ENCODE measurements at regions of chr5 and their contacts with region 1.

Region 1: GRCh38 chr5:68287976-68288706 is 72.6 kb downstream of the PIK3R1 start:
- DNase-seq: peak; percentile 63
- H3K4me3 Mint-ChIP-seq: peak overlapping the region; percentile 84
- H3K27ac Mint-ChIP-seq: peak overlapping the region; percentile 88
- H3K4me1 Mint-ChIP-seq: peaks cover 86% of the 10 kb centered on the region
- H3K27me3 Mint-ChIP-seq: no peaks in the 10 kb centered on the region

Region 2: DNA sequence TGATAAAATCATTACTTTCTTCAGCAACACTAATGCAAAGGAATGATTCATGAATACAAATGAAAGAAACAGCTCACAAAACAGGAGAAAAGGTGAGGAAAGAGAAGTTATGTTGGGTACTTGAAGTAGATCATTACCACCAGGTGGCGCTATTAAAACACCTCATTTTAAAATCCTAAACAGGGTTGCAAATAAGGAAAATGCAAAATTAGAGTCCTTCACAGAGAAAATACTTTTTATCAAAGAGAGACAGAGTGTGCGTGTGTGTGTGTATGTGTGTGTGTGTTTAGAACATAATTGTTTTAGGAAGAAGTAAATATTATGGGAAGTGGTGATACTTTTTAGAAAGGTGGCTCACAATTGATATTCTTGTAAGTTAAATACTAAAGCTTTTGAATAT is 1042.0 kb before region 1 on chr5:
- CTCF ChIA-PET with region 1: interaction called, 12 read pairs
- POLR2A ChIA-PET with region 1: no interaction called
- intact Hi-C with region 1: no loop called
- DNase-seq: no peak
- H3K4me3 Mint-ChIP-seq: no peak overlapping the region
- H3K27ac Mint-ChIP-seq: no peak overlapping the region
- H3K4me1 Mint-ChIP-seq: peaks cover 8% of the 10 kb centered on the region
- H3K27me3 Mint-ChIP-seq: no peaks in the 10 kb centered on the region

Region 3: DNA sequence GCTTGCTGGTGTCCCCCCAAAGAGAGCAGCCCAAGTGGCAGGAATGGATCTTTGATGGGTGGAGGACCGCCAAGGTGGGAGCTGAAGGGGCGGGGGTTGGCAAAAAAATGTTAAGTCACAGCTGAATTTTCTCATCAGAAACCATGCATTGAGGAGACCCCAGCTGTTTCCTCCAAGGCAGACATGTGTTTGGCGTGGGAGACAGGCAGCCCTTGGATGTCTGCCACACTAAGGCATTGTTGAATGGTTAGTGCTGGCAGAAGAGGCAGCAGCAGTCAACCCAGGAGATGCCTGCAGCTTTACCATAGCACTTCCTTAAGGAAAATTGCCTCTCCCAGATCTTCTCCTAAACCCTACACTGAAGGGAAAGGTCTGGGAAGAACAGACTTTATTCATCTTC is 696.6 kb before region 1 on chr5:
- CTCF ChIA-PET with region 1: no interaction called
- POLR2A ChIA-PET with region 1: no interaction called
- intact Hi-C with region 1: no loop called
- DNase-seq: no peak
- H3K4me3 Mint-ChIP-seq: no peak overlapping the region
- H3K27ac Mint-ChIP-seq: no peak overlapping the region
- H3K4me1 Mint-ChIP-seq: no peaks in the 10 kb centered on the region
- H3K27me3 Mint-ChIP-seq: no peaks in the 10 kb centered on the region

Region 4: GRCh38 chr5:68272289-68272688 is 15.9 kb before region 1 on chr5:
- CTCF ChIA-PET with region 1: interaction called, 24 read pairs
- POLR2A ChIA-PET with region 1: no interaction called
- intact Hi-C with region 1: no loop called
- DNase-seq: no peak
- H3K4me3 Mint-ChIP-seq: no peak overlapping the region
- H3K27ac Mint-ChIP-seq: no peak overlapping the region
- H3K4me1 Mint-ChIP-seq: peaks cover 89% of the 10 kb centered on the region
- H3K27me3 Mint-ChIP-seq: no peaks in the 10 kb centered on the region

Region 5: DNA sequence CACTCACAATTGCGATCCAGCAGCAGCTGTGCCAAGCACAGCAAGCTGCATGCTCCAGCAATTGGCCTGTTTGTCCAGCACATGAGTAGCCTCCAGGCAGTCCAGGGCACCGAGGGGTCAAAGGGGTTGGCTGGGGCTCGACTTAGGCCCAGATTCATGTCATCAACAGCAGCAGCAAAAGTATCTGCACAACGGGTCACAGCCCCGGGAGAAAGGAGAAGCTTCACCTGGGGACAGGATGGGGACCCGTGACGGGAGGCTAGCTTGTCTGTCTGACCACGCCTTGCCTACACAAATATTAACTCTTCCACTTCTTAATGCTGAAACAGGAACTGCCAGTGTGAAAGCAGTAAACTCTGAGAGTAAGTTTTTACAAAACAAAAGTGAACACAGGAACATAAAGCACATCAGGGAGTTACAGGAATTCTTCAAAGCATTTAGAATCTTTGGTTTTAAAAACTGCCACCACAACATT is 118.7 kb after region 1 on chr5:
- CTCF ChIA-PET with region 1: interaction called, 19 read pairs
- POLR2A ChIA-PET with region 1: no interaction called
- intact Hi-C with region 1: no loop called
- DNase-seq: no peak
- H3K4me3 Mint-ChIP-seq: no peak overlapping the region
- H3K27ac Mint-ChIP-seq: no peak overlapping the region
- H3K4me1 Mint-ChIP-seq: peaks cover 23% of the 10 kb centered on the region
- H3K27me3 Mint-ChIP-seq: no peaks in the 10 kb centered on the region

Region 6: GRCh38 chr5:68460147-68460798 is 172.1 kb after region 1 on chr5:
- CTCF ChIA-PET with region 1: interaction called, 83 read pairs
- POLR2A ChIA-PET with region 1: interaction called, 5 read pairs
- intact Hi-C with region 1: loop called (anchors 1 kb)
- DNase-seq: peak; percentile 32
- H3K4me3 Mint-ChIP-seq: no peak overlapping the region
- H3K27ac Mint-ChIP-seq: no peak overlapping the region
- H3K4me1 Mint-ChIP-seq: peaks cover 23% of the 10 kb centered on the region
- H3K27me3 Mint-ChIP-seq: no peaks in the 10 kb centered on the region

Region 7: GRCh38 chr5:68745448-68745847 is 457.3 kb after region 1 on chr5:
- CTCF ChIA-PET with region 1: no interaction called
- POLR2A ChIA-PET with region 1: no interaction called
- intact Hi-C with region 1: loop called (anchors 1 kb)
- DNase-seq: no peak
- H3K4me3 Mint-ChIP-seq: no peak overlapping the region
- H3K27ac Mint-ChIP-seq: no peak overlapping the region
- H3K4me1 Mint-ChIP-seq: peaks cover 2% of the 10 kb centered on the region
- H3K27me3 Mint-ChIP-seq: peaks cover 8% of the 10 kb centered on the region

Measured in activated CD4-positive, alpha-beta memory T cell treated with anti-CD3 and anti-CD28 coated beads for 36 hours (primary cell).